ENCODE measurements at regions of chr12 and their contacts with region 1.

Region 1: DNA sequence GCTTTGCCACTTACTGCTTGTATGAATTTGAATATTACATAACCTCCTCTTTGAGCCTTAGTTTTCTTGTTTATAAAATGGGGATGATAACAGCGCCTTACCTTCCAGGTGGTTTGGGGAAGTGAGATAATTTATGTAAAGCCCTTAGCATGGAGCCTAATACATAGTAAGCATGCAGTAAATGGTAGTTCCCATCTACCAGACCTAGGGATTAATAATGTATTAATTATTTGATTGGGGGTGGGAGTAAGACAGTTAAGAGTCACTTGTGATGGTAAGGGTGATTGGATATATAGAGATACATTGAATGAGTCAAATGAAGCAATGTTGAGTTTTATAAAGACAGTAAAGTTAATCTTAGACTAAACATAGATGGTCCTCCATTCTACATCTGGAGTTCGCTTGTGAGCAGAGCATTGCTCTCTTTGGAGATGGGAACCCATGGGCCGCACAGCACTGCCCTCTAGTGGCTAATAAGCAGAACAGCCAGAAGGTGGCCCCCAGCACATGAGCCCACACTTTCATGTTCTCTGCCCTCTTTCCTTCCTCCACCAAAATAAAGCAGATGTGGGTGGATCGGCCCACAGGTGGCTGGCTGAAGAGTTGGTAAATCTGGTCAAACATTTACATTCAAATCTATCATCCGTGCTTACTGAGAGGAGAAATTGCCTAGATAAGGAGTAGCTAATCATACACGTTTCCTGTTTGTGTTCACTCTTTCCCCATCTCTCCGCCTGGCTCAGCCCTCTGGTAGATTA is 26.5 kb upstream of the TAMALIN start:
- DNase-seq: peak; percentile 63
- ATAC-seq: peak; percentile 98
- H3K4me3 ChIP-seq: no peak overlapping the region
- H3K27ac ChIP-seq: no peak overlapping the region
- H3K4me1 ChIP-seq: peaks cover 8% of the 10 kb centered on the region
- H3K27me3 ChIP-seq: no peaks in the 10 kb centered on the region
- CTCF ChIP-seq: peak; percentile 96
- POLR2A ChIP-seq: 0 out of 2 replicates have a peak, but pooled peaks have one; percentile 31
- RAD21 ChIP-seq: peak; percentile 97

Region 2: GRCh38 chr12:51823875-51824565 is 156.2 kb before region 1 on chr12:
- CTCF ChIA-PET with region 1: no interaction called
- POLR2A ChIA-PET with region 1: no interaction called
- dilution Hi-C with region 1: no loop called
- in situ Hi-C with region 1: no loop called
- intact Hi-C with region 1: loop called (anchors 5 kb)
- DNase-seq: peak; percentile 73
- ATAC-seq: peak; percentile 33; the same call in 1 of the 2 replicates
- H3K4me3 ChIP-seq: no peak overlapping the region
- H3K27ac ChIP-seq: no peak overlapping the region
- H3K4me1 ChIP-seq: peaks cover 3% of the 10 kb centered on the region; the same call in 1 of the 2 replicates
- H3K27me3 ChIP-seq: no peaks in the 10 kb centered on the region; the same call in 1 of the 2 replicates
- CTCF ChIP-seq: peak; percentile 68
- POLR2A ChIP-seq: no peak
- RAD21 ChIP-seq: peak; percentile 83

Region 3: DNA sequence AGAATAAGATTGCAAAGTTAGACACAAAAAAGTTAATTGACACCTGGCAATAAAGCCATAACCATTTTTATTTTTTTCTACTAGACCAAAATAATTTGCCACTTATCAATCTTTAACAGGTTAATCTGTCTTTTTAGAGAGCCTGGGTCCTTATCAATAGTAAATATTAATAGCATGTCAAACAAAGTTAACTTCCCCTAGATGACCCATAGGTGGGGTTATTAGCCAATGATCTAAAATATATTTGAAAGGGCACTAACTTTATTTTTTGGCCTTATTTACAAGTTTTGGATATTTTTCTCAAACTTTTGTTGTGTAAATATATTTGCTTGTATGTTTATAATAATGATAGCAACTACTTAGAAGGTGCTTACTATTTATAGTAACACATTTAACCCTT is 88.4 kb before region 1 on chr12:
- CTCF ChIA-PET with region 1: interaction called, 4 read pairs
- POLR2A ChIA-PET with region 1: no interaction called
- dilution Hi-C with region 1: no loop called
- in situ Hi-C with region 1: loop called (anchors 5 kb)
- intact Hi-C with region 1: loop called (anchors 1 kb)
- DNase-seq: peak; percentile 31
- ATAC-seq: no peak
- H3K4me3 ChIP-seq: no peak overlapping the region
- H3K27ac ChIP-seq: no peak overlapping the region
- H3K4me1 ChIP-seq: peaks cover 6% of the 10 kb centered on the region; the same call in 1 of the 2 replicates
- H3K27me3 ChIP-seq: no peaks in the 10 kb centered on the region
- CTCF ChIP-seq: peak; percentile 54
- POLR2A ChIP-seq: no peak
- RAD21 ChIP-seq: peak; percentile 49

Region 4: DNA sequence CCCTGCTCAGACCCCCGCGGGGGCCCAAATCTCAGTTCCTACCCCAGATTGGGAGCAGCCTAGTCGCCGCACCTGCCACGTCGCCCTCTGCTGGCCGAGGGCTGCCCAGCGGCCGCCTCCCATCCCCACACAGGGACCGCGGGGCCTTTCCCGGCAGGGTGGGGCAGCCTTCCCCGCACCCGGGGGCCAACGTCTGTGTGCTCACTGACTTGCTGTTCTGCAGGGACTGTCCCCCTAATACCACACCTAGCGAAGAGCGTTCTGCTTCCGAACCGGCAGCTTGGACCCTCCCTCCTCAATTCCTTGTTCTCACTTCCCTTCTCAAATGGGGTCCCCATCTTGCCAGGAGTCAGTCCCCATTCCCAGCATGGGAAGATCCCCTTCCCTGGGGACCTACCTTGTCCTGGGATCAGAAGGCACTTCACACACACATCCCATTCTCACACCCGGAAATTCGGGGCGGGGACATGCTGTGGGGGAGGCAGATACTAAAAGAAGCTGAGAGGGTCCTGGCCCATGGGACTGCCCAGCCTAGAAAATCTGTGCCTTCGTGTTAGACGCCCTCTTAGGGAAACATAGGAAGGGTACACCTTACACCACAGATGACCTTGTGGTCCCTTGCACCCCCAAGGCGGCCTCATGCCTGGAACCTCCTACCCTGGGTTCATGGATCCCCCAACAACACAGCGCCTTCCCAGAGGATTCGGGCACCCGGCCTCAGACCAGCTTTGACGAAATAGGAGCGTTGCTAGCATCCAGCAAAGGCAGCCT is 56.5 kb before region 1 on chr12:
- CTCF ChIA-PET with region 1: interaction called, 3 read pairs
- POLR2A ChIA-PET with region 1: no interaction called
- dilution Hi-C with region 1: no loop called
- in situ Hi-C with region 1: no loop called
- intact Hi-C with region 1: loop called (anchors 2 kb)
- DNase-seq: no peak
- ATAC-seq: peak; percentile 73
- H3K4me3 ChIP-seq: no peak overlapping the region
- H3K27ac ChIP-seq: no peak overlapping the region
- H3K4me1 ChIP-seq: peaks cover 10% of the 10 kb centered on the region
- H3K27me3 ChIP-seq: no peaks in the 10 kb centered on the region
- CTCF ChIP-seq: peak; percentile 71
- POLR2A ChIP-seq: no peak
- RAD21 ChIP-seq: peak; percentile 60

Region 5: GRCh38 chr12:51954561-51955361 is 25.5 kb before region 1 on chr12:
- CTCF ChIA-PET with region 1: no interaction called
- POLR2A ChIA-PET with region 1: no interaction called
- dilution Hi-C with region 1: no loop called
- in situ Hi-C with region 1: no loop called
- intact Hi-C with region 1: no loop called
- DNase-seq: no peak
- ATAC-seq: no peak
- H3K4me3 ChIP-seq: no peak overlapping the region
- H3K27ac ChIP-seq: no peak overlapping the region
- H3K4me1 ChIP-seq: peaks cover 12% of the 10 kb centered on the region
- H3K27me3 ChIP-seq: peaks cover 5% of the 10 kb centered on the region
- CTCF ChIP-seq: no peak
- POLR2A ChIP-seq: no peak
- RAD21 ChIP-seq: no peak

Measured in IMR-90 (cell line).